ENCODE measurements at regions of chr9 and their contacts with region 1.

Region 1: GRCh38 chr9:106929471-106930177 is 66.7 kb downstream of the ZNF462 start:
- DNase-seq: no peak
- H3K4me3 ChIP-seq: no peak overlapping the region
- CTCF ChIP-seq: no peak
- POLR2A ChIP-seq: no peak

Region 2: GRCh38 chr9:105686936-105687335 is 1242.7 kb before region 1 on chr9:
- intact Hi-C with region 1: loop called (anchors 5 kb)
- DNase-seq: no peak
- H3K4me3 ChIP-seq: no peak overlapping the region
- CTCF ChIP-seq: no peak
- POLR2A ChIP-seq: no peak